ENCODE measurements at regions of chr2 and their contacts with region 1.

Region 1: GRCh38 chr2:121400201-121400600 is 115.2 kb upstream of the TFCP2L1 start:
- DNase-seq: no peak
- H3K4me3 ChIP-seq: no peak overlapping the region
- H3K27ac ChIP-seq: no peak overlapping the region
- H3K4me1 ChIP-seq: no peaks in the 10 kb centered on the region
- H3K27me3 ChIP-seq: no peaks in the 10 kb centered on the region
- CTCF ChIP-seq: no peak
- EP300 ChIP-seq: no peak
- POLR2A ChIP-seq: no peak

Region 2: DNA sequence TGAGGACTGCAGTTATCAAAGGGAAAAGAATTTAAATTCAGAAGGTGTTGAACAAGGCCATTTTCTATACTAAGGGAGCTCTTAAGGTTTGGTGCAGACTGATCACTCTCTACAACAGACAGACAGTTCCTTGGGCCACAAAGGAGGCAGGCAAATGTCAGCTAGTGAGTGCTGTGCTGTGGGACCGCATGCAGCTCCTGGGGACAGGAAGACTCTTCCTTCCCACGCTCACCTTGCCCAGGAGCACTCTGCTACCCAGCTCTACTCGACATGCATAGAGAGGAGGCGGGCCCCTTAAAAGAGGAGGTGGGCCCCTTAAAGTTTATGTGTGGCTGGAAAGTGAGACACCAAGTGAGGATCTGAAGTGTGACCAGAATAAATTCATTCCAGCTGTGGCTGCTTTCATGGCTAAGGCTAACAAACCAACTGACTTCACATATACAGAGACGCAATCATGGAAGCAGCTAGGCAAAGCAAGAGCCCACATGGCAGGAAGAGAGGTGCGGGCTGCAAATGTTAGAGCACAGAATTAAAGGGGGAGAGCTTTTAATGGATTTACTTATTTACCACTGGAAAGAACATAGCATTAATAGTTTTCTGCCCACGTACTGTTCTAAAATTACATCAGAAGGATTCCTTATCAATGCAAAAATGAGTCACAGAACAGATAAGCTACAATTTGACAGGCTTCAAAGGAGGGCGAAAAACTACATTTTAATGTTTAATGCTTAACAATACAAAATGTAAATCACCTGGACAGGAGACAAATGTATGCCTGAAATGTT is 29.1 kb after region 1 on chr2:
- in situ Hi-C with region 1: no loop called
- intact Hi-C with region 1: no loop called
- DNase-seq: no peak
- H3K4me3 ChIP-seq: no peak overlapping the region
- H3K27ac ChIP-seq: no peak overlapping the region
- H3K4me1 ChIP-seq: no peaks in the 10 kb centered on the region
- H3K27me3 ChIP-seq: no peaks in the 10 kb centered on the region
- CTCF ChIP-seq: no peak
- EP300 ChIP-seq: no peak
- POLR2A ChIP-seq: no peak

Region 3: GRCh38 chr2:121519732-121520640 is 119.8 kb after region 1 on chr2:
- in situ Hi-C with region 1: no loop called
- intact Hi-C with region 1: no loop called
- DNase-seq: no peak
- H3K4me3 ChIP-seq: no peak overlapping the region
- H3K27ac ChIP-seq: no peak overlapping the region
- H3K4me1 ChIP-seq: no peaks in the 10 kb centered on the region
- H3K27me3 ChIP-seq: no peaks in the 10 kb centered on the region
- CTCF ChIP-seq: no peak
- EP300 ChIP-seq: no peak
- POLR2A ChIP-seq: no peak

Region 4: DNA sequence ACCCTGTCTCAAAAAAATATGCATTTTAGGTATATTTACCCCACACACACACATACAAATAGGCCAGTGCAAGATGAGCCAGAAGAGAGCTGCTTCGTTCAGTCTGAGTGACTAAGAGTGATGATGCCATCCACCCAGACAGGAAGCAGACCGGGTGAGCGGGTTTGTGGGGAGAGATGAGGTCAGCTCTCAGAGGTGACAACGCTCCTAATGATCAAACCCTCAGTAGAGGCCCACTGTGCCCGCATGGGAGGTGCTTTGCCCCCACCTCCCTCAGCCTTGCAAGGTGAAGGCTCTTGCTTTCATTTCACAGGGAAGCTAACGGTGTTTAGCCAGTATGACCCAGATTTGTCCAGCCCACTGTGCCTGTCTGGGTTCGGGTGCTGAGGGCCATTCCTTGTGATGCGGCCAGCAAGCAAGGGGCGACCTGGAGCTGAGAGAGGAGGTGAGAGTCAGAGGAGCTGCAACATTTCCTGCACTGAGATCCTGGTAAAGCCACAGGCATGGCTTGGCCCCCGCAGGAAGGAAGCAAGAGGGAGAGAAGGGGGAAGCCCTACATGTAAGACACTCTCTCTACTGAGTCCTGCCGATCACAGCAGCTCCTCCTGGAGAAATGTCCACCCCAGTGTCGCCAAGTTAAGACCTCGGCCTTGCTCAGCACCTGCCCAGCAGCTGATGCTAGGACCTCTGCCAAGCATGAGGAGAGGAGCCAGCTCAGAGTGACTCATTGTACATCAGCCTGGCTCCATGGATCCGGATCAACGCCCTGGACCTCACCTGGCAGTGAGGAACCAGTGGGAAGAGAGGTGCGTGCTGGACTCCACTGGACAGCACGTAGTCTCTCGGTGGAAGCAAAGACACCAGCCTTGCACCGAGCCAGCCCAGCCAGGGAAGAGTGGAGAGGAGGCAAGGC is 299.5 kb after region 1 on chr2:
- in situ Hi-C with region 1: loop called in 2 of 4 experiments (anchors 25 kb)
- intact Hi-C with region 1: no loop called
- DNase-seq: peak; percentile 52
- H3K4me3 ChIP-seq: no peak overlapping the region
- H3K27ac ChIP-seq: peak overlapping the region in 1 of 4 donors; percentile 23
- H3K4me1 ChIP-seq: peaks cover 0 to 5% (median 0%) of the 10 kb centered on the region in 4 donors
- H3K27me3 ChIP-seq: no peaks in the 10 kb centered on the region
- CTCF ChIP-seq: no peak
- EP300 ChIP-seq: no peak
- POLR2A ChIP-seq: no peak

Region 5: GRCh38 chr2:121710470-121711170 is 310.4 kb after region 1 on chr2:
- in situ Hi-C with region 1: loop called (anchors 10 to 25 kb)
- intact Hi-C with region 1: no loop called
- DNase-seq: no peak
- H3K4me3 ChIP-seq: no peak overlapping the region
- H3K27ac ChIP-seq: no peak overlapping the region
- H3K4me1 ChIP-seq: peaks cover 0 to 16% (median 1%) of the 10 kb centered on the region in 4 donors
- H3K27me3 ChIP-seq: no peaks in the 10 kb centered on the region
- CTCF ChIP-seq: no peak
- EP300 ChIP-seq: no peak
- POLR2A ChIP-seq: no peak

Measured in transverse colon (tissue), 4 donors.